Common myeloid progenitor, CD34-positive (primary cell): ENCODE measurements at regions of chr5 and their contacts with region 1.

Region 1: GRCh38 chr5:160021831-160022446 is 13.0 kb downstream of the TTC1 start:
- DNase-seq: peak; percentile 65 to 81 (median 70)
- H3K4me3 ChIP-seq: no peak overlapping the region
- H3K27ac ChIP-seq: no peak overlapping the region
- H3K4me1 ChIP-seq: no peaks in the 10 kb centered on the region
- H3K27me3 ChIP-seq: no peaks in the 10 kb centered on the region

Region 2: DNA sequence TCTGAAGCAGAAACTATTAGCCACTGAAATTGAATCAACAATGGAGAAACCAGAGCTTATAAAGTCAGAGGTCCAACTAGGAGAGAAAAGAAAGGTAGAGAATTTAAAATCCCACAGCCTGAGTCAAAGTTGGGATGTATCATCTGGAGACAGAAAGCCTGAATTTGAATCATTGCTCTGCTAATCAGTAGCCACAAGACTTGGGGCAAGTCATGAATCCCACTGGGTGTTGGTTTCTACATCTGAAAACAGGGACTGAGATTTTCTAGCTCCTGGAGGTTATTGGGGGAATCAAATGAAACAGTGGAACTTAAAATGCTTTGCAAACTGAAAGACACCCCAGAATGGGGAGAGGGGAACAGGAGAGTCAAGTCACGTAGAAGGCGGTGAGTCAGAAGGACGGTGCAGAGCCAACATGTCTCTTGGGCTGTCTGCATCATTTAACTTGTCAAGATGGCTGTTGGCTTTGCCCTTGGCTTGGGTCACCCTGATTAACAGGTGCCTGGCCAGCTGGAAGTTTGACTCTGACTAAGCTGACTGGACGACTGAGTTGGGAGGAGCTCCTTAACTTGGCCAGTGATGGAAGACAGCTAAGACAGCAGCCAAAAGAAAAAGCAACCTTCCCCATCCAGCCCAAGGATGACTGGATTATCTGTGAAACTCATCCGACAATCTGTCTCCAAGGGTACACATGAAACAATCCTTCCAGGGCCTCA is 166.3 kb before region 1 on chr5:
- CTCF ChIA-PET with region 1: no interaction called
- POLR2A ChIA-PET with region 1: no interaction called
- DNase-seq: no peak
- H3K4me3 ChIP-seq: no peak overlapping the region
- H3K27ac ChIP-seq: no peak overlapping the region
- H3K4me1 ChIP-seq: no peaks in the 10 kb centered on the region
- H3K27me3 ChIP-seq: peaks cover 0 to 2% (median 0%) of the 10 kb centered on the region in 5 experiments

Region 3: GRCh38 chr5:159956074-159956473 is 65.9 kb before region 1 on chr5:
- CTCF ChIA-PET with region 1: no interaction called
- POLR2A ChIA-PET with region 1: no interaction called
- DNase-seq: no peak
- H3K4me3 ChIP-seq: no peak overlapping the region
- H3K27ac ChIP-seq: no peak overlapping the region
- H3K4me1 ChIP-seq: no peaks in the 10 kb centered on the region
- H3K27me3 ChIP-seq: peaks cover 0 to 5% (median 0%) of the 10 kb centered on the region in 5 experiments

Region 4: DNA sequence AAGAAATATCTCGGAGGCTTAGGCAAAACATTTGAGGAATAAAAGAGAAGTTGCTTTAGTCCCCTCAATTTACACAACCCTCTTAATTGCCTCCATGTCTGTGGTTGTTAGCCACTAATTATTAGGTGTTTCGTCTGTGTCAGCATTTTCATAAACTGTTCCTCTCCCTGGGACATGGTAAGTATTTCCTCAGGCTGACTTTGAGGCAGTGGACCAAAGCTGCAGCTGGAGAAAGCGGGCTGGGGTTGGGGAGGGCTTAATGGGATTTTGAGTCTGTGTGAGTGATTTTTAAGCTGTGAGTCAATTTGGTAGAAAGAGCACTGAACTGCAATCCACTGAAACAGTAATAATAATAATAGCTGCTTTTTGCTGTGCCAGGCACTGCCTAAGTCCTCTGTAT is 26.0 kb before region 1 on chr5:
- CTCF ChIA-PET with region 1: no interaction called
- POLR2A ChIA-PET with region 1: no interaction called
- DNase-seq: no peak
- H3K4me3 ChIP-seq: no peak overlapping the region
- H3K27ac ChIP-seq: no peak overlapping the region
- H3K4me1 ChIP-seq: no peaks in the 10 kb centered on the region
- H3K27me3 ChIP-seq: peaks cover 0 to 2% (median 0%) of the 10 kb centered on the region in 5 experiments

Region 5: GRCh38 chr5:160008877-160009590 is 12.9 kb before region 1 on chr5 and contains the start of gene TTC1:
- CTCF ChIA-PET with region 1: interaction called, 15 read pairs
- POLR2A ChIA-PET with region 1: no interaction called
- DNase-seq: peak; percentile 99 to 100 (median 99)
- H3K4me3 ChIP-seq: peak within 1 kb of the TSS; percentile 66 to 100 (median 98)
- H3K27ac ChIP-seq: peak within 1 kb of the TSS; percentile 85 to 93
- H3K4me1 ChIP-seq: peaks cover 8 to 18% (median 13%) of the 10 kb centered on the region in 4 experiments
- H3K27me3 ChIP-seq: no peaks in the 10 kb centered on the region

Region 6: GRCh38 chr5:160605266-160605665 is 583.3 kb after region 1 on chr5:
- CTCF ChIA-PET with region 1: no interaction called
- POLR2A ChIA-PET with region 1: no interaction called
- DNase-seq: no peak
- H3K4me3 ChIP-seq: no peak overlapping the region
- H3K27ac ChIP-seq: no peak overlapping the region
- H3K4me1 ChIP-seq: no peaks in the 10 kb centered on the region
- H3K27me3 ChIP-seq: no peaks in the 10 kb centered on the region